T-cell (primary cell): ENCODE measurements at regions of chr2 and their contacts with region 1.

Region 1: GRCh38 chr2:195664528-195664927 is 7.5 kb downstream of the SLC39A10 start:
- DNase-seq: no peak
- ATAC-seq: no peak
- H3K4me3 ChIP-seq: no peak overlapping the region
- H3K4me3 Mint-ChIP-seq: no peak overlapping the region
- H3K27ac ChIP-seq: no peak overlapping the region
- H3K27ac Mint-ChIP-seq: peak overlapping the region; percentile 70 to 75
- H3K4me1 ChIP-seq: peaks cover 18 to 21% of the 10 kb centered on the region in 2 experiments
- H3K4me1 Mint-ChIP-seq: peaks cover 58 to 72% (median 72%) of the 10 kb centered on the region in 3 donors
- H3K27me3 ChIP-seq: no peaks in the 10 kb centered on the region
- H3K27me3 Mint-ChIP-seq: no peaks in the 10 kb centered on the region

Region 2: DNA sequence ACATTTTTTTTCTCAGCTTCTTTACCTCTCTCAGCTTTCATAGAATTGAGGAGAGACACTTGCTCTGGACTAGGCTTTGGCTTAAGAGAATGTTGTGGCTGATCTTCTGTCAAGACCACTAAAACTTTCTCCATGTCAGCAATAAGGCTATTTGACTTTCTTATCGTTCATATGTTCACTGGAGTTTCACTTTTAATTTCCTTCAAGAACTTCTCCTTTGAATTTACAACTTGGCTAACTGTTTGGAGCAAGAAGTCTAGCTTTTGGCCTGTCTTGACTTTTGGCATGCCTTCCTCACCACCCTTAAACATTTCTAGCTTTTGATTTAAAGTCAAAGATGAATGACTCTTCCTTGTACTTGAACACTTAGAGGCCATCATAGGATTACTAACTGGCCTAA is 111.9 kb before region 1 on chr2:
- CTCF ChIA-PET with region 1: interaction called in 1 of 2 experiments, 6 read pairs
- POLR2A ChIA-PET with region 1: interaction called in 1 of 2 experiments, 14 read pairs
- DNase-seq: no peak
- ATAC-seq: no peak
- H3K4me3 ChIP-seq: no peak overlapping the region
- H3K4me3 Mint-ChIP-seq: peak overlapping the region; percentile 55 to 66 (median 63)
- H3K27ac ChIP-seq: peak overlapping the region; percentile 11
- H3K27ac Mint-ChIP-seq: peak overlapping the region; percentile 85 to 89
- H3K4me1 ChIP-seq: peaks cover 5 to 24% of the 10 kb centered on the region in 2 experiments
- H3K4me1 Mint-ChIP-seq: peaks cover 46 to 65% (median 63%) of the 10 kb centered on the region in 3 donors
- H3K27me3 ChIP-seq: no peaks in the 10 kb centered on the region
- H3K27me3 Mint-ChIP-seq: no peaks in the 10 kb centered on the region